ENCODE measurements at regions of chr2 and their contacts with region 1.

Region 1: DNA sequence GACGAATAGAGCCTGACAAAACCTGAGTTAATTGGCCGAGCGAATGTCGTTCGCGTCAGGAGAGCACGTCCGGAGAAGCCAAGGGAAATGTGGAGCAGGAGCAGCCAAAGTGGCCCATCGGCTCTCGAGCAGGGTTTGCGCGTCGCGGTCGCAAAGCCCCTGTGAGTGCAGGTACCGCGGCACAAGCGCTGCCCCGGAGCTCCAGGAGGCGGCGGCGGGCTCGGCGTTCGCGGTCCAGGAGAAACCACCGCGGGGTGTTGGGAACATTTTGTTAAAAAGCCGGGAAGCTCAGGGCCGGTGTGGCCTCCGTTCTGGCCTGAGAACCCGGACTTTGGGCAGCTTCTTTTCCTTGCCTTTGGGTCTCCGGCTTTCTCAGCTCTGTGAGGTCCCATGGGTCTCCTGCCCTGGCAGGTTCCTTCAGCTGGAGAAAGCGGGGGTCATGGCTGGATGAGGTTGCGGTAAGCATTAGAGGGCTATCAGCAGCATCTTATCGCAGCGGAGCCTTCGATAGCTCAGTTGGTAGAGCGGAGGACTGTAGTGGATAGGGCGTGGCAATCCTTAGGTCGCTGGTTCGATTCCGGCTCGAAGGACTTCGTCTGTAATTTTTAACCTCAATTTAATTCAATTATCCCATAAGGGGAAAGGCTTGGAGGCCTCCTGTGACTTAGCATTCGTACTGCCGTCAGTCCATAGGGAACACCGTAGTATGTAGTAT is 1.0 kb upstream of the AGBL5 start:
- DNase-seq: peak; percentile 95
- ATAC-seq: peak; percentile 73
- H3K4me3 Mint-ChIP-seq: peak overlapping the region; percentile 90
- H3K27ac Mint-ChIP-seq: peak overlapping the region; percentile 98
- H3K4me1 Mint-ChIP-seq: peaks cover 18% of the 10 kb centered on the region
- H3K27me3 Mint-ChIP-seq: peaks cover 4% of the 10 kb centered on the region

Region 2: DNA sequence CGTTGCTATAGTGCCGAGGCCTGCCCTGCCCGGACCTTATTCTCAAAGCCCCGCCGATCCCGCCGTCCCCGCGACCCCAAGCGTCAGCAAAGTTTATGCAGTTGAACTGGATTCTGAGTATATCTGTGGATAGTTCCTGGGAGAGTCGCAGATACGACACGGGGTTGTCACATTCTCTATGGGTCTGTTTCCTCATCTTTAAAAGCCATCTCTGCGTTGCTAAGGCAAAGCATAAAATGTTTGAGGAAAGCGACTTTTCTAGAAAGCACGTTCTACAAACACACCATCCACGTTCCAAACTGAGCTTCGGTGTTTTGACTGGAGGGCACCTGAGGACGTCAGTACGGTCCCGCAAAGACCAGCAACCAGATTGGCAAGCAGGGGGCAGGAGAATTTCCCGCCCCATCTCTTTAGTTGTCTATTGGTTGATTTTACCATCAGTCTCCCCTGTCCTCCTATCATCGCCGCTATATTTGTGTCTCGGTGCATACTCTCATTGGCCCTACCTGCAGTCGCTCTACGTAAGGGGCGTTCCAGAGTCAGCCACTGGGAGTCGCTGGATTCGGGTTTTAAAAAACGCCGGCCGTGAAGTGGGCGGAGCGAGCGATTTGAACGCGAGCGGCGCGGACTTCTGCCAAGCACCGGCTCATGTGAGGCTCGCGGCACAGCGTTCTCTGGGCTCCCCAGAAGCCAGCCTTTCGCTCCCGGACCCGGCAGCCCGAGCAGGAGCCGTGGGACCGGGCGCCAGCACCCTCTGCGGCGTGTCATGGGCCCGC is 264.8 kb before region 1 on chr2 and contains the start of gene CENPA:
- CTCF ChIA-PET with region 1: no interaction called
- POLR2A ChIA-PET with region 1: no interaction called
- intact Hi-C with region 1: loop called in 1 of 2 experiments (anchors 1 kb)
- DNase-seq: peak; percentile 97
- ATAC-seq: peak; percentile 100
- H3K4me3 Mint-ChIP-seq: peak within 1 kb of the TSS; percentile 80
- H3K27ac Mint-ChIP-seq: peak within 1 kb of the TSS; percentile 79
- H3K4me1 Mint-ChIP-seq: peaks cover 16% of the 10 kb centered on the region
- H3K27me3 Mint-ChIP-seq: peaks cover 7% of the 10 kb centered on the region
- total RNA-seq, gene CENPA: 37.0 to 38.0 TPM

Region 3: GRCh38 chr2:27071277-27071989 is 21.0 kb after region 1 on chr2 and contains the start of gene OST4:
- CTCF ChIA-PET with region 1: interaction called, 8 read pairs
- POLR2A ChIA-PET with region 1: interaction called, 15 read pairs
- intact Hi-C with region 1: loop called (anchors 1 kb)
- DNase-seq: peak; percentile 94
- ATAC-seq: peak; percentile 89
- H3K4me3 Mint-ChIP-seq: peak within 1 kb of the TSS; percentile 96
- H3K27ac Mint-ChIP-seq: peak within 1 kb of the TSS; percentile 91
- H3K4me1 Mint-ChIP-seq: peaks cover 66% of the 10 kb centered on the region
- H3K27me3 Mint-ChIP-seq: no peaks in the 10 kb centered on the region
- total RNA-seq, gene OST4: 305 to 406 TPM

Region 4: DNA sequence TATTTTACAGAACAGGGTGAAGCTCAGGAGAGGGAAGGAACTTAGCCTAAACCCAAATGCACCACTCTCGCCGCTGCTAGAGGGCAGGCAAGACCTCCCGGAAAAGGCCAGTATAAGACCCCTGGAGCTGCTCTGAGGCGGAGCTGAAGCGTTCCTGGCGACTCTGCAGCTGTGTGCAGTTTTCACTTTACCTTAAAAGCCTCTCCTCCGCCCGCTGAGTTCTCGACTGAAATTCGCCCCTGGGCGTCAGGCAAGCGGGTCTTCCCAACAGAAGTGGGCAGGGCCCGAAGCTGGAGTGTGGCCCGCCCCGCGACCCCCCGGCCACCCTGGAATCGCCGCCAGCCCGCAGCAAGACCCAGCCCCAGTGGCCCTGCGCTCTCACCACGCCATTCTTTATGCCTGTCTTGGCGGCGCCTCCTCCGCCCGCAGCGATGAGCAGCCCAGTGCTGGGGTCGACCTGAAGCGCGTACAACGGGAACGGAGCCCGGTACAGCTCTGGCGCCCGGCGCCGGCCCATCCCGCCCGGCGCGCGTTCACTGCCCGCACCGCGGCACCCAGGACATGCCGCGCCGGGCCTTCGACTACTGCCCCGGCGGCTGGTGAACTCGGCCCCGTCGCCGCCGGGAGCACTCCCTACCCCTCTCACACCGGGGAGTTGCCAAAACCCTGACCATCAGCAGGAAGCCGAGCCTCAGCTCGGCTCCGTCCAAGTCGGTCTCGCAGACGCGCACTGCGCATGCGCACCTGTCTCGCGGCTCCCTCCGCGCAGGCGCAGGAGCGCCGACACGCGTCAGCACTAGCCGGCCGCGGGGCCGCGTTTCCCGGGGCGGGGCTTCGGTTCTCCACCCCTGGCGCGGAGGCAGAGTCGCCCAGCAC is 83.7 kb after region 1 on chr2 and contains the start of gene PREB:
- CTCF ChIA-PET with region 1: interaction called, 3 read pairs
- POLR2A ChIA-PET with region 1: no interaction called
- intact Hi-C with region 1: loop called in 1 of 2 experiments (anchors 1 kb)
- DNase-seq: peak; percentile 99
- ATAC-seq: peak; percentile 97
- H3K4me3 Mint-ChIP-seq: peak within 1 kb of the TSS; percentile 81
- H3K27ac Mint-ChIP-seq: peak within 1 kb of the TSS; percentile 94
- H3K4me1 Mint-ChIP-seq: peaks cover 16% of the 10 kb centered on the region
- H3K27me3 Mint-ChIP-seq: no peaks in the 10 kb centered on the region
- total RNA-seq, gene PREB: 59.7 to 59.9 TPM

Region 5: DNA sequence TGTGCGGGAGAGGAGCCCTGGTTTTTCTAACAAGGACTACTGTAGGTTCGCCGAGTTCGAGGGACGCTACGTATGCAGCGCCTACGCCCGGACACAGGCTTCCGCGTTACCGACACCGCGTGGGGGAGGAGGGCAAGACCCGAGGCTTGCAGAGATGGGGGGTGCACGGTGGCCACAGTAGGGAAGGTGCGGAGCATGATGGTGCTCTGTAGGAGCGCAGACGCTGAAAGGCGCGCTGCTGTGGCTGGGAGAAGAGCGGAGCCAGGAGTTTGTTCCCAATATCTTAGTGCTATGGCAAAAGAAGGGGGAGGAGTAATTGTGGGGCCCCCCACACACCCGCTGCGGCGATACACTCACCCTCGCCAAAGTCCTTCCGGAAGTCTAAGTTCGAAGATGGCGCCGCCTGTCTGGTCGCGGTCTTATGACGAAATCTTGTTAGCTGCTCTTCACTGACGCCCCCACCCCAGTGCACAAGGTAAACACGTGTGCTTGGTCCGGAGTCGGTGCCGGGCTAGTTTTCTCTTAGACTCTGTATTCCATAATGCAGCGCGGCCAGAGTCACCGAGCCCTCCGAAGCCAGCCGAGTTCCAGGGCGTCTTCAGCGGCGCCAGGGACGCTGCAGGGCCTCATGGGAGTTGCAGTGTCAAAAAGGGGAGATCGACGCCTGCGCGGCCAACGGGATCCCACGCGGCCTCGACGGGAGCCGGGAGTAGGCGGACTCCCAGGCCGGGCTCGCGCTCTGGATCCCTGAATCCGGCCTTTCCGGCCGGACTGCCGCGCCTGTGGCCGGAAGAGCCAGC is 306.1 kb after region 1 on chr2 and contains the start of gene GTF3C2:
- CTCF ChIA-PET with region 1: interaction called, 3 read pairs
- POLR2A ChIA-PET with region 1: no interaction called
- intact Hi-C with region 1: loop called in 1 of 2 experiments (anchors 1 kb)
- DNase-seq: peak; percentile 96
- ATAC-seq: peak; percentile 82
- H3K4me3 Mint-ChIP-seq: peak within 1 kb of the TSS; percentile 98
- H3K27ac Mint-ChIP-seq: peak within 1 kb of the TSS; percentile 100
- H3K4me1 Mint-ChIP-seq: peaks cover 50% of the 10 kb centered on the region
- H3K27me3 Mint-ChIP-seq: no peaks in the 10 kb centered on the region
- total RNA-seq, gene GTF3C2: 60.3 to 70.2 TPM

Region 6: GRCh38 chr2:27606611-27607010 is 556.2 kb after region 1 on chr2:
- CTCF ChIA-PET with region 1: no interaction called
- POLR2A ChIA-PET with region 1: no interaction called
- intact Hi-C with region 1: no loop called
- DNase-seq: no peak
- ATAC-seq: no peak
- H3K4me3 Mint-ChIP-seq: no peak overlapping the region
- H3K27ac Mint-ChIP-seq: no peak overlapping the region
- H3K4me1 Mint-ChIP-seq: peaks cover 4% of the 10 kb centered on the region
- H3K27me3 Mint-ChIP-seq: no peaks in the 10 kb centered on the region

Region 7: DNA sequence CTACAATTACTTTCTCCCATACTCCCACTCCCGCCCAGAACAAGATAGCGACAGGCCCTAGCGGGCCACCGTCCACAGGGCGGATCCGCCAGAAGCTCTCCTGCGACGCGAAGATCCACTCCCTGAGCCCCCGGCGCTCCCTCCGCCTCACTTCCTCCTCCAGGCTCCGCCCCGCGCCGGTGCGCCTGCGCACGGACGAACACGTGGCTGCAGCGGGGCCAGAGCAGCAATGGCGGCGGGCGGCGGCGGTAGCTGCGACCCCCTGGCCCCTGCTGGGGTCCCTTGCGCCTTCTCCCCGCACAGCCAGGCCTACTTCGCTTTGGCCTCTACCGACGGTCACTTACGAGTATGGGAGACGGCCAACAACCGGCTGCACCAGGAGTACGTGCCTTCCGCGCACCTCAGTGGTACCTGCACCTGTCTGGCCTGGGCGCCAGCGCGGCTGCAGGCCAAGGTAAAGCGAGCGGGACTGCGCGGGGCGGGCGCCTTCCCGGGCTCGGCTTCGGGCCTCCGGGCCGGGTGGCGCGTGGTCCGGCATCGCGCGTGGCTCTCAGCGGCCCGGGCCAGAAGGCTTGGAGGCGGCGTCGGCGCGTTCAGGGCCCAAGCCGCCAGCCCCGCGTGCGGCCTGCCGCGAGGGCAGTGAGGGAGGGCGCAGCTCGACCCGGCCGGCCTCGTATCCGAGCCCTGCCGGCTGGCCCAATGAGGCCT is 1844.2 kb after region 1 on chr2 and contains the start of gene WDR43:
- CTCF ChIA-PET with region 1: no interaction called
- POLR2A ChIA-PET with region 1: no interaction called
- intact Hi-C with region 1: loop called in 1 of 2 experiments (anchors 10 kb)
- DNase-seq: peak; percentile 99
- ATAC-seq: peak; percentile 94
- H3K4me3 Mint-ChIP-seq: peak within 1 kb of the TSS; percentile 97
- H3K27ac Mint-ChIP-seq: peak within 1 kb of the TSS; percentile 95
- H3K4me1 Mint-ChIP-seq: peaks cover 32% of the 10 kb centered on the region
- H3K27me3 Mint-ChIP-seq: no peaks in the 10 kb centered on the region
- total RNA-seq, gene WDR43: 109 to 170 TPM

Measured in activated CD4-positive, alpha-beta T cell treated with anti-CD3 and anti-CD28 coated beads for 36 hours (primary cell).